Left lung (tissue), 14 donors: ENCODE measurements at regions of chr15 and their contacts with region 1.

Region 1: DNA sequence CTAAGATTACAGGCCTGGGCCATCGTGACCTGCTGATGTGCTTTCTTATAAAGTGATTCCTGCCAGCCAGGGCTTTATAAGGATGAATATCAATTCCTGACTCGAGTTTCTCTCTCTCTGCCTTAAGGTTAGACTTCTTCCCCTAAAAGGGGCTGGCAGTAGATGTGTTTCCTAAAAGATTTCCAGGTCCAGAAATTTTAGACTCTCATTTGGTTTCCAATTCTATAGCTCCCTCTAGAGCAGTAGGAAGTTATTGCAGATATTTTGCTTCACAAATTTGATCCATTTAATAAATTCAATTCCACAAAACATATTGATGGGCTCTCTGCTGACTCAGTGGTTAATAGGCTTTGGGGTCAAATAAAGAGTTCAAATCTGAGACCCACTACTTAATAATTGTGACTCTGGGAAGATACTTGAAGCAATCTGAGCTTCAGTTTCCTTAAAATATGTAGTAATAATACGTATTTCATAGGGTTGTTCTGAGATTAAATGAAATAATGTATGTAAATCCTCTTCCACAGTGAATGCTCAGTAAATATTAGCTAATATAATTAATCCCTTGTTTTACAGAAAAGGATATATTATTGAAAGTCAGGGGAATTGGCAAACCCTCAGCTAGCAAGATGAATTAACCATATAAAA is 2.1 kb downstream of the TRIM69 start:
- DNase-seq: peak in 1 of 4 donors; percentile 57
- ATAC-seq: peak; percentile 79
- H3K4me3 ChIP-seq: no peak overlapping the region
- H3K27ac ChIP-seq: no peak overlapping the region
- H3K4me1 ChIP-seq: peaks cover 0 to 29% of the 10 kb centered on the region in 2 donors
- H3K27me3 ChIP-seq: no peaks in the 10 kb centered on the region
- CTCF ChIP-seq: peak; percentile 63 to 68

Region 2: DNA sequence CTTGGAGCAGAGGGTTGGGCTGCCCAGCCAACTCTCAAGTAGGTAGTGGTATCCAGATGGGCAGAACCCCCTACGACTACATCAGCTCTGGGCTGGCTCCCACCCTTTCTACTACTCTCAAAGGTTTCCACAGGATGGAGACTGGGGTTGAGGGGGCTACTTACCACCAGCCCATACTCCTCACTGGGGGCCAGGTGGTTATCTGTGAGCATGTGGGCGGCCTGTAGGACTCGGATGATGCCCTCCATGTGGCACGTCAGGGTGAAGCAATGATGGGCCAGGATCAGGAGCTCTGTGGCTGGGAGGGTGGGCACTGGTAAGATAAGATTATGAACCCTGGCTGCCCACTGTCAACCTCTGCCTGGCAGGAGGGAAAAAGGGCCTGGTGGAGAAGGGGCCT is 168.1 kb before region 1 on chr15:
- intact Hi-C with region 1: no loop called
- DNase-seq: no peak
- ATAC-seq: no peak
- H3K4me3 ChIP-seq: no peak overlapping the region
- H3K27ac ChIP-seq: no peak overlapping the region
- H3K4me1 ChIP-seq: no peaks in the 10 kb centered on the region
- H3K27me3 ChIP-seq: no peaks in the 10 kb centered on the region
- CTCF ChIP-seq: no peak

Region 3: DNA sequence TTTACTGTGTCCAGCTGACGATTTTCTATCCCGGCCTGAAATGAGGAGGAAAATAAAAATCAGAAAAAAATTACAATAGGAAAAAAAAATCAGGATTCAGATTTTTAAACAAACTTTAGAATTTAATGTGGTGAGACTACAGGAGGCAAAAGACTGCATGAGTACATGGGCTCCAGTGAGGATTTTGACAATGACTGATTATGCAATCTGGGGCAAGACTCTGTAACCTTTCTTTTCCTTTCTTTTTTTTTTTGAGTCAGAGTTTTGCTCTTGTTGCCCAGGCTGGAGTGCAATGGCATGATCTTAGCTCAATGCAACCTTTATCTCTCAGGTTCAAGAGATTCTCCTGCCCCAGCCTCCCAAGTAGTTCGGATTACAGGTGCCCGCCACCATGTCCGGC is 104.9 kb before region 1 on chr15:
- intact Hi-C with region 1: no loop called
- DNase-seq: no peak
- ATAC-seq: peak; percentile 41
- H3K4me3 ChIP-seq: no peak overlapping the region
- H3K27ac ChIP-seq: peak overlapping the region in 1 of 2 donors; percentile 13
- H3K4me1 ChIP-seq: peaks cover 0 to 14% of the 10 kb centered on the region in 2 donors
- H3K27me3 ChIP-seq: no peaks in the 10 kb centered on the region
- CTCF ChIP-seq: no peak

Region 4: GRCh38 chr15:44663409-44664308 is 74.8 kb before region 1 on chr15 and contains the start of gene SPG11:
- intact Hi-C with region 1: loop called (anchors 5 to 10 kb)
- DNase-seq: peak; percentile 92 to 99 (median 98)
- ATAC-seq: peak; percentile 96
- H3K4me3 ChIP-seq: peak within 1 kb of the TSS; percentile 95 to 100
- H3K27ac ChIP-seq: peak within 1 kb of the TSS; percentile 98 to 100
- H3K4me1 ChIP-seq: peaks cover 5 to 57% of the 10 kb centered on the region in 2 donors
- H3K27me3 ChIP-seq: no peaks in the 10 kb centered on the region
- CTCF ChIP-seq: peak; percentile 91 to 99
- polyA plus RNA-seq, gene SPG11: 80.0 to 86.2 (median 83.2) TPM